ENCODE measurements at regions of chr6 and their contacts with region 1.

Region 1: GRCh38 chr6:41298785-41299502 is 12.5 kb upstream of the TREM1 start:
- DNase-seq: no peak
- H3K4me3 Mint-ChIP-seq: peak overlapping the region; percentile 66
- H3K27ac Mint-ChIP-seq: peak overlapping the region; percentile 91
- H3K4me1 Mint-ChIP-seq: peaks cover 76% of the 10 kb centered on the region
- H3K27me3 Mint-ChIP-seq: no peaks in the 10 kb centered on the region

Region 2: GRCh38 chr6:41100871-41101287 is 198.1 kb before region 1 on chr6:
- CTCF ChIA-PET with region 1: no interaction called
- intact Hi-C with region 1: loop called (anchors 1 kb)
- DNase-seq: no peak
- H3K4me3 Mint-ChIP-seq: no peak overlapping the region
- H3K27ac Mint-ChIP-seq: no peak overlapping the region
- H3K4me1 Mint-ChIP-seq: peaks cover 2% of the 10 kb centered on the region
- H3K27me3 Mint-ChIP-seq: no peaks in the 10 kb centered on the region

Region 3: GRCh38 chr6:41278699-41279405 is 20.1 kb before region 1 on chr6:
- CTCF ChIA-PET with region 1: interaction called, 16 read pairs
- intact Hi-C with region 1: loop called (anchors 1 kb)
- DNase-seq: peak; percentile 89
- H3K4me3 Mint-ChIP-seq: no peak overlapping the region
- H3K27ac Mint-ChIP-seq: peak overlapping the region; percentile 20
- H3K4me1 Mint-ChIP-seq: peaks cover 14% of the 10 kb centered on the region
- H3K27me3 Mint-ChIP-seq: no peaks in the 10 kb centered on the region

Region 4: GRCh38 chr6:41288030-41288753 is 10.8 kb before region 1 on chr6:
- CTCF ChIA-PET with region 1: interaction called, 5 read pairs
- intact Hi-C with region 1: loop called (anchors 1 kb)
- DNase-seq: peak; percentile 24
- H3K4me3 Mint-ChIP-seq: no peak overlapping the region
- H3K27ac Mint-ChIP-seq: peak overlapping the region; percentile 86
- H3K4me1 Mint-ChIP-seq: peaks cover 23% of the 10 kb centered on the region
- H3K27me3 Mint-ChIP-seq: no peaks in the 10 kb centered on the region

Measured in activated naive CD4-positive, alpha-beta T cell treated with anti-CD3 and anti-CD28 coated beads for 36 hours (primary cell).